GM13976 (cell line): ENCODE measurements at regions of chr2 and their contacts with region 1.

Region 1: DNA sequence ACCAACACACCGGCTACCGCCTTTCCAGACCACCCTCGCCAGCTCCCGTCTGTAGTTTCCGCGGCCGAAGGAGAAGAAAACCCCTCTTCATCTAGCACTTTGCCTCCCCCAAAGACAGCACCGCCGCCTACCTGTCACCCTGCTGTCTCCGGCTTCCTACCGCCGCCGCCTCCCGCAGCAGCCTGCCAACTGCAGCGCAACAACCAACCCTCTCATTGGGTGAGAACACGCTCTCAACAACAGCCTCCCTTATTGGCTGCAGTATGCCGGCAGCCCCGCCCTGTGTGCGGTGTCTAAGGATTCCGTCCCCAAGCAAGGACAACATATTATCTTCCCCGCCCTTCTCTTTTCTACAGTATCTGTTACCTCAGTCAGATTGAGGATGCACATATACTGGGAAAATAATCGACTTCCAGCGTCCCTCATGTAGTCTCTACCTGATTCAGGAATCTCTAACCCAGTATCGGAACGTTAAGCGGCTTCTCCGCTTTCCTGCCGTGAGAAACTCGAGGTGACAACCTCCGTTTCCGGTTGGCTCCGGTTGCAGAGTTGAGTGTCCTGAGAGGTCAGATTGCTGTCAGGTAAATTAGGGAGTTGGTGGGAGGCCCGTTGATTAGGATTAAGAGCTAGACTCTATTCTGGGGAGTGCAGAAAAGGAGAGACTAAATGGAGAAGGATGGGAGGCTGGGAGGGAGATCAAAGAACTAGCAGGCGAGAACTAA is at the starts of genes HYCC2 and NDUFB3:
- DNase-seq: peak; percentile 96
- CTCF ChIP-seq: peak; percentile 15

Region 2: GRCh38 chr2:200713003-200713703 is 358.5 kb before region 1 on chr2:
- in situ Hi-C with region 1: loop called (anchors 25 kb)
- DNase-seq: peak; percentile 84
- CTCF ChIP-seq: peak; percentile 31